HCT116 (cell line): ENCODE measurements at regions of chr15 and their contacts with region 1.

Region 1: GRCh38 chr15:70097337-70098169 is at the start of gene TLE3:
- DNase-seq: peak; percentile 95
- ATAC-seq: peak; percentile 67
- H3K4me3 ChIP-seq: peak within 1 kb of the TSS; percentile 70 to 93
- H3K27ac ChIP-seq: peak within 1 kb of the TSS; percentile 95
- H3K4me1 ChIP-seq: peaks cover 25 to 53% of the 10 kb centered on the region in 2 experiments
- H3K27me3 ChIP-seq: no peaks in the 10 kb centered on the region
- CTCF ChIP-seq: 0 out of 6 replicates have a peak, but pooled peaks of 1 of the 3 experiments have one; percentile 10
- POLR2A ChIP-seq: peak; percentile 86
- RAD21 ChIP-seq: no peak
- total RNA-seq, gene TLE3: 53.9 TPM

Region 2: DNA sequence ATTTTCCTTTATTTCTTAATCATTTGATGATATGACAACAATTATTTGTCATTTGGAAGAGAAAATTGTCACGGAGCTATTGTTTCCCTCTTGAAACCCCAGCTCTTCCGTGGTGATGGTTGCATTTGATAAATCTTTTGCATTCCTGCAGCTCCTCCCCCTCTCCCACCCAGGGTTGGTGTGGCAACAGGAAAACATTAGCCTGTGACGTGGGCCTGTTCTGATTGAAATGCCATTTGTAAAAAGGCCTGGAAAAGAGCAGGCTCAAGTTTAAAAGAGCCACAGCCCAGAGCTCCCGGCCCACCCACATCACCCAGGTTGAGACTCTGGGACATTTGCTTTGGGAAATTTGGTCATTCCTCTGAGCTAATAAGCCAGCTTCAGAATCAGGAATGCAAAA is 362.4 kb before region 1 on chr15:
- CTCF ChIA-PET with region 1: no interaction called
- POLR2A ChIA-PET with region 1: no interaction called
- RAD21 ChIA-PET with region 1: no interaction called
- intact Hi-C with region 1: loop called (anchors 5 kb)
- DNase-seq: no peak
- ATAC-seq: no peak
- H3K4me3 ChIP-seq: no peak overlapping the region
- H3K27ac ChIP-seq: no peak overlapping the region
- H3K4me1 ChIP-seq: no peaks in the 10 kb centered on the region
- H3K27me3 ChIP-seq: peaks cover 19% of the 10 kb centered on the region
- CTCF ChIP-seq: no peak
- POLR2A ChIP-seq: no peak
- RAD21 ChIP-seq: no peak

Region 3: GRCh38 chr15:70111203-70112073 is 13.9 kb after region 1 on chr15:
- CTCF ChIA-PET with region 1: interaction called, 14 read pairs
- POLR2A ChIA-PET with region 1: interaction called, 15 read pairs
- RAD21 ChIA-PET with region 1: interaction called in 1 of 2 experiments, 12 read pairs
- intact Hi-C with region 1: loop called (anchors 1 kb)
- DNase-seq: peak; percentile 67
- ATAC-seq: peak; percentile 94
- H3K4me3 ChIP-seq: no peak overlapping the region
- H3K27ac ChIP-seq: no peak overlapping the region
- H3K4me1 ChIP-seq: peaks cover 6 to 12% of the 10 kb centered on the region in 2 experiments; a peak in 3 of 4 replicates
- H3K27me3 ChIP-seq: no peaks in the 10 kb centered on the region; the same call in 1 of the 2 replicates
- CTCF ChIP-seq: no peak
- POLR2A ChIP-seq: no peak
- RAD21 ChIP-seq: no peak

Region 4: GRCh38 chr15:70327856-70328678 is 230.5 kb after region 1 on chr15:
- CTCF ChIA-PET with region 1: no interaction called
- POLR2A ChIA-PET with region 1: no interaction called
- RAD21 ChIA-PET with region 1: no interaction called
- intact Hi-C with region 1: no loop called
- DNase-seq: no peak
- ATAC-seq: peak; percentile 32; the same call in 1 of the 2 replicates
- H3K4me3 ChIP-seq: no peak overlapping the region
- H3K27ac ChIP-seq: no peak overlapping the region
- H3K4me1 ChIP-seq: no peaks in the 10 kb centered on the region
- H3K27me3 ChIP-seq: no peaks in the 10 kb centered on the region; the same call in 1 of the 2 replicates
- CTCF ChIP-seq: no peak
- POLR2A ChIP-seq: no peak
- RAD21 ChIP-seq: no peak

Region 5: DNA sequence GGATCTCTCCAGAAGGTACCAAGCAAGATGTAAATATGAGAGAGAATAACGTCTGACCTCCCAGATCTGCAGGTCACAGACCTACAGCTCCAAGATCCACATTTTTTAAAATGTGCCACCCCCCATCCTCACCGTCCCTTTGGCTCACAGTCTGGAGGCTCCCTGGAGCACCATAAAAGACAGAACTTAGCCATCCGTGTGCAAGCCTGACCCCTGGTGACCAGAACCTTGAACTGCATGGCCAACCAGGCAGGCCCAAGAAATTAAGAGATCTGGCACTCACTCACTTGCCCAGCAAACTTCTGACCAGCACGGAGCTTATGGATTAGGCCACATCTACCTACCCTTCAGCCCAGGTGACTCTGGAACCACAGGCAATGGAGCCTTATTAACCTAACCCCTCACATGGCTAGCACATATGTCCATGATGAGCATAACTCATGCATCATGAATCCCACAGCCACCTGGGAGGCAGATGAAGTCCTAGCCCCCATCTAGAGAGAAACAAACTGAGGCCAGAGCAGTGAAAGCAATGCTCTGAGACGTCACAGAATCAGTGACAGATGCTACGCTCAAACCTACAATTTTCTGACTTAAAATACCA is 390.6 kb after region 1 on chr15:
- CTCF ChIA-PET with region 1: interaction called, 3 read pairs
- POLR2A ChIA-PET with region 1: no interaction called
- RAD21 ChIA-PET with region 1: no interaction called
- intact Hi-C with region 1: loop called (anchors 10 kb)
- DNase-seq: no peak
- ATAC-seq: peak; percentile 71
- H3K4me3 ChIP-seq: no peak overlapping the region
- H3K27ac ChIP-seq: no peak overlapping the region
- H3K4me1 ChIP-seq: peaks cover 14 to 18% of the 10 kb centered on the region in 2 experiments
- H3K27me3 ChIP-seq: peaks cover 4% of the 10 kb centered on the region; the same call in 1 of the 2 replicates
- CTCF ChIP-seq: peak in 2 of 3 experiments; percentile 95 to 97; a peak in 4 of 6 replicates
- POLR2A ChIP-seq: no peak
- RAD21 ChIP-seq: no peak